CD4-positive, alpha-beta memory T cell (primary cell): ENCODE measurements at regions of chr13 and their contacts with region 1.

Region 1: DNA sequence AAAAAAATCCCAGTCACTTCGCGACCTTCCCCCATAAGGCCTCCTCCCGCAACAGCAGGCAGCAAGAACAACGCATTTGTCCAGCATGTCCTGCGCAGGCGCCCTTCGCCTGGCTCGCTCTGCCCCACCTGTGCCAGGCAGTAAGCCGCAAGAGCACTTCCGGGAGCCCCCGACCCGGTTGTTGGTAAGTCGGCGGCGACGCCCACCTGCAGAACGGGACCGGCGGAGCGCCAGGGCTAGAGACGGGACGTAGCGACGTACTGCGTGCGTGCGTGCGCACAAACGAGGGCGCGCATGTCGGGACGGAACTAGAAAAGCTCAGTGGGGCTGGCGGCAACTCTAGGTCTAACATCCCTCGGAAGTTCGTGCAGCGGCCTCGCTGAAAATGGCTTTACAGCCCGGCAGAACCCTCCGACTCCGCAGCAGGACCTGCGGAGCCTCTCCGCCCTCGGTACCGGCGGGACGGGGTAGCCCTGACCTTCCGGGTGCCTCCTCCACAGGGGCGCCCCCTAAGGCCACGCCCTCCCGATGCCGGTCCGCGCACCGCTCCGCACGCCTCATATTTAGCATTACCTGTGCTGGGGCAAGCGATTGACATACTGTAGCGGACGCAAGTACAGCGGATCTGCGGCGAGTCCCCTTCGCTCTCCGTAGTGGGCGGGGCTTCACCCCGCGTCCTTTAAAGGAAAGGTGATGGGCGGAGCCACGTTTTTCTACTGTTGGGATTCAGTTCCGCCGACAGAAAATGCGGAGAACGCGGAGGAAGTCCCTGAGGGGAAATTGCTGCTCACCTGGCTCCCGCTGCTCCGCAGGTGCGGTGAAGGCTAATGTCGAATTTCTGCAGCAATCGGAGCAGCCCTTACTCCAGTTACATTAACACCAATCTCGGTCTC is at the start of gene MTIF3:
- DNase-seq: peak; percentile 97 to 98 (median 98)
- H3K4me3 ChIP-seq: peak within 1 kb of the TSS; percentile 53 to 94
- H3K4me3 Mint-ChIP-seq: peak within 1 kb of the TSS; percentile 92 to 97 (median 94)
- H3K27ac ChIP-seq: peak within 1 kb of the TSS; percentile 91
- H3K27ac Mint-ChIP-seq: peak within 1 kb of the TSS; percentile 95 to 99 (median 97)
- H3K4me1 ChIP-seq: peaks cover 63% of the 10 kb centered on the region
- H3K4me1 Mint-ChIP-seq: peaks cover 31 to 77% (median 56%) of the 10 kb centered on the region in 4 donors
- H3K27me3 ChIP-seq: no peaks in the 10 kb centered on the region
- H3K27me3 Mint-ChIP-seq: no peaks in the 10 kb centered on the region
- total RNA-seq, gene MTIF3: 86.4 to 92.4 TPM

Region 2: GRCh38 chr13:26253787-26254582 is 1196.2 kb before region 1 on chr13 and contains the start of gene CDK8:
- CTCF ChIA-PET with region 1: no interaction called
- POLR2A ChIA-PET with region 1: no interaction called
- intact Hi-C with region 1: loop called (anchors 5 kb)
- DNase-seq: peak; percentile 91 to 95 (median 92)
- H3K4me3 ChIP-seq: peak within 1 kb of the TSS; percentile 55 to 87
- H3K4me3 Mint-ChIP-seq: peak within 1 kb of the TSS; percentile 91 to 100 (median 94)
- H3K27ac ChIP-seq: peak within 1 kb of the TSS; percentile 58
- H3K27ac Mint-ChIP-seq: peak within 1 kb of the TSS; percentile 86 to 99 (median 93)
- H3K4me1 ChIP-seq: peaks cover 18% of the 10 kb centered on the region
- H3K4me1 Mint-ChIP-seq: peaks cover 29 to 44% (median 30%) of the 10 kb centered on the region in 4 donors
- H3K27me3 ChIP-seq: no peaks in the 10 kb centered on the region
- H3K27me3 Mint-ChIP-seq: peaks cover 0 to 1% of the 10 kb centered on the region in 2 donors
- total RNA-seq, gene CDK8: 10.4 to 11.7 TPM

Region 3: GRCh38 chr13:27251166-27252091 is 198.8 kb before region 1 on chr13 and contains the start of gene RPL21:
- CTCF ChIA-PET with region 1: no interaction called
- POLR2A ChIA-PET with region 1: interaction called, 4 read pairs
- intact Hi-C with region 1: loop called (anchors 1 kb)
- DNase-seq: peak; percentile 92 to 95 (median 93)
- H3K4me3 ChIP-seq: peak within 1 kb of the TSS; percentile 84 to 98
- H3K4me3 Mint-ChIP-seq: peak within 1 kb of the TSS; percentile 93 to 99 (median 96)
- H3K27ac ChIP-seq: peak within 1 kb of the TSS; percentile 99
- H3K27ac Mint-ChIP-seq: peak within 1 kb of the TSS; percentile 98 to 100 (median 100)
- H3K4me1 ChIP-seq: peaks cover 44% of the 10 kb centered on the region
- H3K4me1 Mint-ChIP-seq: peaks cover 34 to 74% (median 54%) of the 10 kb centered on the region in 4 donors
- H3K27me3 ChIP-seq: no peaks in the 10 kb centered on the region
- H3K27me3 Mint-ChIP-seq: no peaks in the 10 kb centered on the region
- total RNA-seq, gene RPL21: 2,008 to 2,177 TPM

Region 4: GRCh38 chr13:27406178-27406939 is 43.8 kb before region 1 on chr13:
- CTCF ChIA-PET with region 1: interaction called, 3 read pairs
- POLR2A ChIA-PET with region 1: interaction called, 4 read pairs
- intact Hi-C with region 1: loop called (anchors 1 kb)
- DNase-seq: peak; percentile 49 to 60 (median 56)
- H3K4me3 ChIP-seq: no peak overlapping the region
- H3K4me3 Mint-ChIP-seq: peak overlapping the region in 1 of 8 donors; percentile 71
- H3K27ac ChIP-seq: no peak overlapping the region
- H3K27ac Mint-ChIP-seq: no peak overlapping the region
- H3K4me1 ChIP-seq: peaks cover 3% of the 10 kb centered on the region
- H3K4me1 Mint-ChIP-seq: peaks cover 2 to 6% (median 4%) of the 10 kb centered on the region in 4 donors
- H3K27me3 ChIP-seq: no peaks in the 10 kb centered on the region
- H3K27me3 Mint-ChIP-seq: peaks cover 10 to 13% of the 10 kb centered on the region in 2 donors

Region 5: DNA sequence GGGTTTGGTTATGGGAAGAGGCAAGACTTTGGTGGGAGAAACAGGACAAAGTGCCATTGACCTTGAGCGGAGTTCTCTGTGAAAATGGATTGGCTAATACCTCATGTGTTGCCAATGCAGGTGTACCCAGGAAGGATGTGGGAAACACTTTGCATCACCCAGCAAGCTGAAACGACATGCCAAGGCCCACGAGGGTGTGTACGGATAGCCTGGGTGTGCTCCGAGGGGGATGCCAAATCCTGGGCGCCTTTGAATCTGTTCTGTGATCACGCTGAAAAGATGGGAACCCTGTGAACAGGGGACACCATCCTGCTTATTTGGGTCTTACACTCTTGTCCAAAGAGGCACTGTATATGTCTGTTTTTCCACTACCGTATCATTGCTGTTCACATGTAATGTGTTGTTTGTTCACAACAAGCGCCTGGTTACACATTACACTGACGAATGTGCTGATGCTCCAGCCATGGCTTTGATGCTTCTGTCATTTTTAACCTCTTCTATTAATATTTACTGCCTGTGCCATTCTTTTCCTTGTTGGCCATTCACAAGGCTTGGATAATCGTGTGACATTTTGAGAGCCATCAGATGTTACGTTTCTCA is 17.5 kb before region 1 on chr13:
- CTCF ChIA-PET with region 1: interaction called, 109 read pairs
- POLR2A ChIA-PET with region 1: interaction called, 588 read pairs
- intact Hi-C with region 1: no loop called
- DNase-seq: peak; percentile 54 to 72 (median 60)
- H3K4me3 ChIP-seq: no peak overlapping the region
- H3K4me3 Mint-ChIP-seq: peak overlapping the region in 7 of 8 donors; percentile 15 to 88 (median 51)
- H3K27ac ChIP-seq: peak overlapping the region; percentile 37
- H3K27ac Mint-ChIP-seq: peak overlapping the region; percentile 65 to 96 (median 89)
- H3K4me1 ChIP-seq: peaks cover 53% of the 10 kb centered on the region
- H3K4me1 Mint-ChIP-seq: peaks cover 35 to 70% (median 46%) of the 10 kb centered on the region in 4 donors
- H3K27me3 ChIP-seq: no peaks in the 10 kb centered on the region
- H3K27me3 Mint-ChIP-seq: no peaks in the 10 kb centered on the region

Region 6: DNA sequence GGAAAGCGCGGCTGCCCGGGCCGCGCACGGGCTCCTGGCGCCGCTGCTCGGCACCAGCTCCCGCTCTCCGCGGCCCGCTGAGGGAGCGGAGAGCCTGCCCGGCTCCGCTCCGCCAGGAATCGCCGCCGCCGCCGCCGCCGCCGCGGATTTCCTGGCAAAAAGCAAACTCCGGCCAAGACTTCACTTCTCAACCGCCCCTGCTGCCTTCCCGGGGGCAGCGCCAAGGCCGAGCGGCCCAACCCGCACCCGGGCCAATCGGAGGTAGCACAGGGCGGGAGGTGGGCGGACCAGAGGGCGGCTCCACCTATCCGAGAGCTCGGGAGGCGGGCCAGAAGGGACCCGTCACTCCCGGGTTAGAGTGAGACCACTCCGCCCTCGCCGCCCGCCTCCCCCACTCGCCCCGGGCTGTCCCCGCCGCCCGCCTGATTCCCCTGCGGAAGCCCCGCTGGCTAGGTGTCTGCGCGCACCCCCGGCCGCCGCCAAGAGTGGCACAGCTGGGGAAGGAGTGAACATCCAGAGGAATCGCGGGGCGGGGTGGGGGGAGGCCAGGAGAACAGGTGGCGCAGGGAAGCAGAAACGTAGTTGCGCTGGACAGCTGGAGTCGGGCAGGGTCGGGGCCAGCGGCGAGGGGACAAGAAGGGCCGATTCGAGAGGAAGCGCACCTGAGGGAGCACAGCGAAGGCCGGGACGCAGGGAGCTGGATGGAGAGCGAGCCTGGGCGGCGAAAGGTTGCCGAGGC is 170.4 kb after region 1 on chr13 and contains the start of gene LNX2:
- CTCF ChIA-PET with region 1: interaction called, 4 read pairs
- POLR2A ChIA-PET with region 1: interaction called, 64 read pairs
- intact Hi-C with region 1: loop called (anchors 1 kb)
- DNase-seq: peak; percentile 95
- H3K4me3 ChIP-seq: peak within 1 kb of the TSS; percentile 66 to 95
- H3K4me3 Mint-ChIP-seq: peak within 1 kb of the TSS; percentile 90 to 97 (median 96)
- H3K27ac ChIP-seq: peak within 1 kb of the TSS; percentile 90
- H3K27ac Mint-ChIP-seq: peak within 1 kb of the TSS; percentile 95 to 98 (median 97)
- H3K4me1 ChIP-seq: peaks cover 60% of the 10 kb centered on the region
- H3K4me1 Mint-ChIP-seq: peaks cover 42 to 74% (median 59%) of the 10 kb centered on the region in 4 donors
- H3K27me3 ChIP-seq: no peaks in the 10 kb centered on the region
- H3K27me3 Mint-ChIP-seq: no peaks in the 10 kb centered on the region
- total RNA-seq, gene LNX2: 11.8 to 13.0 TPM

Region 7: GRCh38 chr13:28138012-28138755 is 688.0 kb after region 1 on chr13 and contains the start of gene PAN3:
- CTCF ChIA-PET with region 1: no interaction called
- POLR2A ChIA-PET with region 1: interaction called, 3 read pairs
- intact Hi-C with region 1: loop called (anchors 1 kb)
- DNase-seq: peak; percentile 91 to 94 (median 92)
- H3K4me3 ChIP-seq: peak within 1 kb of the TSS; percentile 62 to 67
- H3K4me3 Mint-ChIP-seq: peak within 1 kb of the TSS; percentile 91 to 99 (median 96)
- H3K27ac ChIP-seq: peak within 1 kb of the TSS; percentile 97
- H3K27ac Mint-ChIP-seq: peak within 1 kb of the TSS; percentile 93 to 99 (median 98)
- H3K4me1 ChIP-seq: peaks cover 44% of the 10 kb centered on the region
- H3K4me1 Mint-ChIP-seq: peaks cover 37 to 62% (median 45%) of the 10 kb centered on the region in 4 donors
- H3K27me3 ChIP-seq: no peaks in the 10 kb centered on the region
- H3K27me3 Mint-ChIP-seq: peaks cover 0 to 2% of the 10 kb centered on the region in 2 donors
- total RNA-seq, gene PAN3: 66.0 to 66.7 TPM